Activated CD4-positive, alpha-beta memory T cell treated with anti-CD3 and anti-CD28 coated beads for 36 hours (primary cell): ENCODE measurements at regions of chr10 and their contacts with region 1.

Region 1: DNA sequence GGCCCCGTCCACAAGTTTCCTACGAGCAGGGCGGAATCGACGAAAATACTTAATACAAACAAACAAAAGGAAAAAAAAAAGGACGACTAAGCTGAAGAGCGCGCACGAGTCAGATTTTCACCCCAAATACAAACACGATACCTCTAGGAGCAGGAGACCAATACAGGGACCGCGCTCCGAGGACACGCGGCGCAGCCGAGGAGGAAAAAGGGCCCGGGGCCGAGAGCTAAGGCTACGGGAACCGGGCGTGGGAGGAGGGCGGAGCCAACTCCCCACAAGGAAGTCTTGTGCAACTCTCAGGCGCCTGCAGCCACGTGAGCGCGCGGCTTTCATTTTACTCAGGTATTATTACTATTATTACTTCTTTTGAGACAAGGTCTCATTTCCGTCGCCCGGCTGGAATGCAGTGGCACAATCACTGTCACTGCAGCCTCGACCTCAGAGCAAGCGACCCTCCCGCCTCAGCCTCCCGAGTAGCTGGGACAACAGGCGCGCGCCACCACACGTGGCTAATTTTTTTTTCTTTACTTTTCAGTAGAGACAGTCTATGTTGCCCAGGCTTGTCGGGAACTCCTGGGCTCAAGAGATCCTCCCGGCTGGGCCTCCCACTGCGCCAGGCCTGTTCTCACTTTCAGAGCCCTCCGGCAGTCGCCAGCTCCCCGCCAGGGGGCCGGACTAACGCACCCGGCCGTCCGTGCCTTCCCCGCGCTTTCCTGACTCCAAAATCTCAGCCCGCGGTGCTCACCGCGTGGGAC is 1.2 kb downstream of the HNRNPF start:
- DNase-seq: peak; percentile 95
- H3K4me3 Mint-ChIP-seq: peak overlapping the region; percentile 97
- H3K27ac Mint-ChIP-seq: peak overlapping the region; percentile 100
- H3K4me1 Mint-ChIP-seq: peaks cover 20% of the 10 kb centered on the region
- H3K27me3 Mint-ChIP-seq: no peaks in the 10 kb centered on the region

Region 2: DNA sequence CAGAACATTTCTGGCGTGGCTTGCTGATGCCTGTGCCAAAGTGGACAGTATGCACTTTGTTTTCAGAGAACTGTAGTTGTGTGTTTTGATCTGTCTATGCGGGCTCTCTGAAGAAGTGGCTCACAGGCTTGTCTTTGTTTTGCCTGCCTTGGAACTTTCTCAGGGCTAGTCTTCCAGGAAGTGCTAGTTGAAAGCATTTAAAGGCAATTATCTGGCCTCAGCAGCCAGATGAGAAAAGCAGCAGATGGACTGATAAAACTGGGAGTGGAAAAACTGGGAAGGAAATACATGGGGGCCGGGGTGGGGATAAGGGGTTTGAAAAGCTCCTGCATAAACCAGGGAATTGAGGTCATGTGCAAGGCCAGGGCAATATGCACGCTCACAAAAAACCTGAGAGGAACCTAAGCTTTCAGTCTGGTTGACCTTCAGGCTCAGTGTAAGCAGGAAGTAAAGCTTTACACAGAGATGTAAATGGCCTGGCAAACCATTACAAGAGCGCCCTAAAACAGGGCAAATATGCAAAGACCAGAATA is 863.8 kb before region 1 on chr10:
- CTCF ChIA-PET with region 1: no interaction called
- POLR2A ChIA-PET with region 1: no interaction called
- intact Hi-C with region 1: no loop called
- DNase-seq: no peak
- H3K4me3 Mint-ChIP-seq: no peak overlapping the region
- H3K27ac Mint-ChIP-seq: no peak overlapping the region
- H3K4me1 Mint-ChIP-seq: peaks cover 16% of the 10 kb centered on the region
- H3K27me3 Mint-ChIP-seq: no peaks in the 10 kb centered on the region

Region 3: DNA sequence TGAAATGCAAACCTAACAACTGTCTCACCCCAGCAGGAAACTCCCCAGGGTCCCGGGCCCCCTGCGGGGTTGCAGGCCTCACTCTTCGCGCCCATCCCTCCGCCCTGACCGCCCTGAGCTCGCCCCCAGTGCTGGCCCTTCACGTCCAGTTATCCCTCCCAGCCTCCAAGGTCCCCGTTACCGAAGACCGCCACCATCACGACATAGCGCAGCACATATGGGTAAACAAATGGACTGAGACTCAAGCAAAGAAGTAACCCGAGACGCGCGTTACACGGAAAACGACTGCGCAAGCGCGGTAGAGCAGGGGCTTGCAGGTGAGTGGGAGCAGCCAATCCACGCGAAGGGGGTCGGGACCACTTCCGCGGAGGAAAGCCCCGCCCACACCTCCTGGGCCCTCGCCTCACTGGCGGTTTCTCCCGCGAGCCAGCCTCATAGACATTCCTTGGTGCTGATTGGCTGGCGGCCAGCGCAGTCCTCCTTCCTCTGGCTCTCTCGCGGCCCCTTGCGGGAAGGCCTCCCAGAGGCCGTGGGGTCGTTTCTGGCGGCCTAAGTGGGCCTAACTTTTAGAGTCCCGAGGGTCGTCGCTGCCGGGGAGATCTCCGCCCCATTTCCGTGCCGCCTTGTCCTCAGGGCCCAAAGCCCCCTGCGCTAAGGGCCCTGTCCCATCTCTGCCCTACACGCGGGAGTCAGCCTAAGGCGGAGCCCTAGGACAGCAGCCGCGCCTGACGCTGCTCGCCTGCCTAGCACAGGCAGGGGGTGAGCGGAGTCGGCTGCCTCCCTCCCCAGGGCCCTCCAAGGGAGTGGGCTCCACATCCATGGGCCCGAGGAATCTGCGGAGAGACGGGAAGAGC is 45.5 kb before region 1 on chr10:
- CTCF ChIA-PET with region 1: no interaction called
- POLR2A ChIA-PET with region 1: interaction called, 6 read pairs
- intact Hi-C with region 1: loop called (anchors 2 kb)
- DNase-seq: peak; percentile 99
- H3K4me3 Mint-ChIP-seq: peak overlapping the region; percentile 98
- H3K27ac Mint-ChIP-seq: peak overlapping the region; percentile 98
- H3K4me1 Mint-ChIP-seq: peaks cover 20% of the 10 kb centered on the region
- H3K27me3 Mint-ChIP-seq: no peaks in the 10 kb centered on the region

Region 4: DNA sequence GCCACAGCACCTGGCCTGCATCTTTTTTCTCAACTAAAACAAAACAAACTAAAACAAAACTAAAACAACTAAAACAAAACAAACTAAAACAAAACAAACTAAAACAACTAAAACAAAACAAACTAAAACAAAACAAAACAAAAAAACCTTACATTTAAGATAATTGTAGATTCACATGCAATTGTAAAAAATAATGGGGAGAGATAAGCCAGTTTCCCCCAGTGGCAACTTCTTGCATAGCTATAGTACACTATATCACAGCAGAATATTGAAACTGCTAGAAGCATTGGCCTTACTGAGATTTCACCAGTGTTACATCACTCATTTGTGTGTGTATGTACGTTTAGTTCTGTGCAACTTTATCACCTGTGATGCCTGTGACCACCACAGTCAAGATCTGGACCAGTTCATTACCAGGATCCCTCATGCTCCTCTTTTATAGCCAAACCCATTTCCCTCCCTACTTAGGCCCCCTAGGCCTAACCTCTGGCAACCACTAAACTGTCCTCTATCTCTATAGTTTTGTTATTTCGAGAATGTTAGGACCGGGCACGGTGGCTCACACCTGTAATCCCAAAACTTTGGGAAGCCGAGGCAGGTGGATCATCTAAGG is 27.0 kb before region 1 on chr10:
- CTCF ChIA-PET with region 1: no interaction called
- POLR2A ChIA-PET with region 1: no interaction called
- intact Hi-C with region 1: no loop called
- DNase-seq: no peak
- H3K4me3 Mint-ChIP-seq: no peak overlapping the region
- H3K27ac Mint-ChIP-seq: no peak overlapping the region
- H3K4me1 Mint-ChIP-seq: no peaks in the 10 kb centered on the region
- H3K27me3 Mint-ChIP-seq: no peaks in the 10 kb centered on the region

Region 5: GRCh38 chr10:43420369-43421200 is 12.8 kb after region 1 on chr10:
- CTCF ChIA-PET with region 1: interaction called, 7 read pairs
- POLR2A ChIA-PET with region 1: interaction called, 40 read pairs
- intact Hi-C with region 1: loop called (anchors 1 kb)
- DNase-seq: peak; percentile 91
- H3K4me3 Mint-ChIP-seq: peak overlapping the region; percentile 80
- H3K27ac Mint-ChIP-seq: peak overlapping the region; percentile 98
- H3K4me1 Mint-ChIP-seq: peaks cover 41% of the 10 kb centered on the region
- H3K27me3 Mint-ChIP-seq: no peaks in the 10 kb centered on the region

Region 6: GRCh38 chr10:43436400-43437140 is 28.8 kb after region 1 on chr10 and contains the start of gene ZNF487:
- CTCF ChIA-PET with region 1: interaction called, 11 read pairs
- POLR2A ChIA-PET with region 1: interaction called, 42 read pairs
- intact Hi-C with region 1: loop called (anchors 1 kb)
- DNase-seq: peak; percentile 94
- H3K4me3 Mint-ChIP-seq: peak within 1 kb of the TSS; percentile 83
- H3K27ac Mint-ChIP-seq: peak within 1 kb of the TSS; percentile 92
- H3K4me1 Mint-ChIP-seq: peaks cover 14% of the 10 kb centered on the region
- H3K27me3 Mint-ChIP-seq: no peaks in the 10 kb centered on the region
- total RNA-seq, gene ZNF487: 2.2 to 2.6 TPM

Region 7: GRCh38 chr10:43606322-43607198 is 198.8 kb after region 1 on chr10 and contains the start of gene ZNF485:
- CTCF ChIA-PET with region 1: no interaction called
- POLR2A ChIA-PET with region 1: no interaction called
- intact Hi-C with region 1: no loop called
- DNase-seq: peak; percentile 73
- H3K4me3 Mint-ChIP-seq: peak within 1 kb of the TSS; percentile 79
- H3K27ac Mint-ChIP-seq: peak within 1 kb of the TSS; percentile 69
- H3K4me1 Mint-ChIP-seq: peaks cover 32% of the 10 kb centered on the region
- H3K27me3 Mint-ChIP-seq: no peaks in the 10 kb centered on the region
- total RNA-seq, gene ZNF485: 4.1 to 4.7 TPM